B cell (primary cell): ENCODE measurements at regions of chr7 and their contacts with region 1.

Region 1: DNA sequence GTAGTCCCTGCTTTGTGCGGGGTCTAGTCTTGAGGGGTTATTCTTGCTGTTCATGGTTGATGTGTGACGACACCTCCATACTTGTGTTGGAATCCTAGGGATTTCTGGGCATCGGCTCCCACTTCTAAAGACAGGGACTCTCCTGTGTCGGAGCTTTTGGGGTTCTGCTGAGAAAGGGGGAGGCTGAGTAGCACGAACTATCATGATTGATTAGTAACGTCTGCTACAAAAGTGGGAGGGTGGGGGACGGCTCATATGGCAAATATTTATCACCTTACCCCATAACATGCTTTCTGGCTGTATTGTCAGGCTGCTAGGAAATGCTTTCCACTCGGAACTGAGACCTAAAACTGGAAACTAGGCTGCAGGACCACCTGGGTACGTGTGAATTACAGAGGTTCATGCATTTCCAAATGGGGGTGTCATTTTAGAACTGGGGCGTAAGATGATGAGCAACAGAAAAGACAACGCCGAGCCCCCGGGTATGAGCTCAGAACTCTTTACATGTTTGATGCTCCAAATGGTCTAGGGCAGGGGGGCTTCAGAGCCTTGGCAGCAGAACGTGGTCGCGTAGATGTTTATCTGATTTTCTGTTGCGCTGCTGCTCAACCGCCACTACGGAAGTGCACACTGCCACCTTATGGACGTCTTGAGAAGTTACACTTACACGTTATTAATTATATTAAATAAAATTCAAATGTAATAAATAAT is 15.1 kb upstream of the NME8 start:
- DNase-seq: peak; percentile 68
- ATAC-seq: peak; percentile 61
- H3K4me3 ChIP-seq: peak overlapping the region in 4 of 5 experiments; percentile 26 to 53 (median 46)
- H3K4me3 Mint-ChIP-seq: peak overlapping the region; percentile 89
- H3K27ac ChIP-seq: no peak overlapping the region
- H3K27ac Mint-ChIP-seq: peak overlapping the region; percentile 53
- H3K4me1 ChIP-seq: peaks cover 6 to 10% of the 10 kb centered on the region in 2 donors
- H3K4me1 Mint-ChIP-seq: peaks cover 16% of the 10 kb centered on the region
- H3K27me3 ChIP-seq: peaks cover 0 to 6% (median 0%) of the 10 kb centered on the region in 4 experiments
- H3K27me3 Mint-ChIP-seq: peaks cover 8% of the 10 kb centered on the region
- CTCF ChIP-seq: peak; percentile 84

Region 2: GRCh38 chr7:36487756-36488336 is 1345.4 kb before region 1 on chr7:
- CTCF ChIA-PET with region 1: no interaction called
- POLR2A ChIA-PET with region 1: no interaction called
- intact Hi-C with region 1: loop called (anchors 2 kb)
- DNase-seq: peak; percentile 58
- ATAC-seq: peak; percentile 36
- H3K4me3 ChIP-seq: no peak overlapping the region
- H3K4me3 Mint-ChIP-seq: no peak overlapping the region
- H3K27ac ChIP-seq: no peak overlapping the region
- H3K27ac Mint-ChIP-seq: no peak overlapping the region
- H3K4me1 ChIP-seq: no peaks in the 10 kb centered on the region
- H3K4me1 Mint-ChIP-seq: no peaks in the 10 kb centered on the region
- H3K27me3 ChIP-seq: no peaks in the 10 kb centered on the region
- H3K27me3 Mint-ChIP-seq: peaks cover 13% of the 10 kb centered on the region
- CTCF ChIP-seq: peak; percentile 76

Region 3: DNA sequence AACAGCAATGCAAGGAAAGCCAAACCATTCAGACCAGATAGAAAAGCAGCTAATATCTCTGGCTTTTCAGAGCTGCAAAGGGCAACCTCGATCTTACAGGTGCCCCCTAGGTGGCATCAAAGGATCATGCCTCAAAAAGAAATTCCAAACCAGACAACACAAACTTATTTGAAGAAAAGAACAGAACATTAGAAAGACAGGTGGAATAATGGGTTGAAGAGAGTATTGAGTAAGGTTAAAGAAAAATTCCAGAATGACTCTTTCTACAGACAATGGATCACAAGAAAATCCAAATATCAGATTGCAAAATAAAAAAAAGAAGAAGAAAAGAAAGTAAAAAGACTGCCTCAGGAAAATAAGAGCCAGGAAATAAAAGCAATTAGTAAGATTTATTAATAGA is 598.3 kb before region 1 on chr7:
- CTCF ChIA-PET with region 1: interaction called, 7 read pairs
- POLR2A ChIA-PET with region 1: no interaction called
- intact Hi-C with region 1: loop called (anchors 1 kb)
- DNase-seq: peak; percentile 58
- ATAC-seq: peak; percentile 24
- H3K4me3 ChIP-seq: no peak overlapping the region
- H3K4me3 Mint-ChIP-seq: no peak overlapping the region
- H3K27ac ChIP-seq: no peak overlapping the region
- H3K27ac Mint-ChIP-seq: no peak overlapping the region
- H3K4me1 ChIP-seq: no peaks in the 10 kb centered on the region
- H3K4me1 Mint-ChIP-seq: peaks cover 2% of the 10 kb centered on the region
- H3K27me3 ChIP-seq: no peaks in the 10 kb centered on the region
- H3K27me3 Mint-ChIP-seq: no peaks in the 10 kb centered on the region
- CTCF ChIP-seq: peak; percentile 81

Region 4: DNA sequence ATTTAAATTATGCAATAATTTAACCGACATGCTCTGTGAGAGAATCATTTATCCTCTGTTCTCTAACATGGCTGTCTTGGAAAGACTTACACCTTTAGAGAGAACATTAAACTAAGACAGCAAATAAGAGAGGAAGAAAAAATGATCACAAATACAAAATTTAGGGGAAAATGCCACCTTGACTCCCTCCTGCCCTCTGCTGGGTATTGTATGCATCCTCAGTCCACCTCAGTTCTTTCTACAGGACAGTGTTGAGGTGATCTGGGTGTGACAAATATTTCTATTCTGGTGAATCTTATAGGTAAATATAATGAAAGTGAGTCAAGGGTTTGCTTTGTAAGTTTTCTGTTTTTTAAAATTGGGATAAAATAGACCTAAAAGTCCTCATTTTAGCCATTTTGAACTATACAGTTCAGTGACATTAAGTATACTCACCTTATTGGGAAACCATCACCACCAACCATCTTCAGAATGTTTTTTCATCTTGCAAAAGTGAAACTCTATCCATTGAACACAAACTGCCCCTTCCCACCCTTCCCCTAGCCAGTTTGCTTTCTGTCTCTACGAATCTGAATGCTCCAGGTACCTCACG is 323.1 kb before region 1 on chr7:
- CTCF ChIA-PET with region 1: interaction called, 8 read pairs
- POLR2A ChIA-PET with region 1: no interaction called
- intact Hi-C with region 1: loop called (anchors 1 kb)
- DNase-seq: peak; percentile 46
- ATAC-seq: no peak
- H3K4me3 ChIP-seq: no peak overlapping the region
- H3K4me3 Mint-ChIP-seq: no peak overlapping the region
- H3K27ac ChIP-seq: no peak overlapping the region
- H3K27ac Mint-ChIP-seq: no peak overlapping the region
- H3K4me1 ChIP-seq: no peaks in the 10 kb centered on the region
- H3K4me1 Mint-ChIP-seq: no peaks in the 10 kb centered on the region
- H3K27me3 ChIP-seq: peaks cover 0 to 11% (median 2%) of the 10 kb centered on the region in 4 experiments
- H3K27me3 Mint-ChIP-seq: peaks cover 33% of the 10 kb centered on the region
- CTCF ChIP-seq: peak; percentile 88

Region 5: DNA sequence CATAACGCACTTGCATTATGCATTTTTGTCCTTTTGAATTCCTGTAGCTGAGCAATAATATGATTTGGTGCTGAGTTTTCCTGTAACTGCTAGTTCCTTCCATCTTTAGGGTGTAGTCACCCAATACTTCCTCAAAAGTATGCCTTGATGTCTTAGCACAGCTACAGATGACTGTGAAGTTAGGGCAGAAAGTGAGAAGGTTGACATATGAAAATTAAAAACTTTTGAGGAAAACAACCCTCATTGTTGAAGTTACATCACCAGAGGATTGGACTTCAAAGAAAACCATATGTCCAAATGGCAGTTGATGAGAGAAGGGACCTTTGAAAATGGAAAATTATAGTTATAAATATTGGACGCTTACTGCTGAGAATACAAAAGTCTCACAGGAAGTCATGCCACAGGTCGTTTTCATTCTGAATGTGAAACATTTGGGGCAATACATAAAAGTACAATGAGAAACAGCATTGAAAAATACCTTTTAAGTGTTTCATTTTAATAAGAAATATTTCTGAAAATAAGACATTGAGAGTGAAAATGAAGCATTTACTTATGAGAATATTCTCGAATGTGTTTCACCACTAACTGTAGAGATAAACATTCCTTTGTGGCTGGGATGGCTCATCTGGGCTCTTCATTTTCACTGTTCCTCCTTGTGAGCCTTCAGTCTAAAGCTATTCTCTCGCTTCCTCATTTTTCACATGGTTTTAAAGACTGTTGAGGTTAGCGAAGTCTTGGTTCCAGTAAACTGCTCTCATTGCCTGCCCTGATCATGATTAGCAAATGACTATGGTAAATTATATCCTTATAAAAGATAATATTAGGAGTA is 46.3 kb before region 1 on chr7:
- CTCF ChIA-PET with region 1: interaction called, 4 read pairs
- POLR2A ChIA-PET with region 1: no interaction called
- intact Hi-C with region 1: loop called (anchors 5 kb)
- DNase-seq: peak; percentile 72
- ATAC-seq: peak; percentile 87
- H3K4me3 ChIP-seq: peak overlapping the region in 3 of 5 experiments; percentile 1 to 17 (median 13)
- H3K4me3 Mint-ChIP-seq: peak overlapping the region; percentile 89
- H3K27ac ChIP-seq: peak overlapping the region; percentile 59 to 85
- H3K27ac Mint-ChIP-seq: peak overlapping the region; percentile 95
- H3K4me1 ChIP-seq: peaks cover 28 to 39% of the 10 kb centered on the region in 2 donors
- H3K4me1 Mint-ChIP-seq: peaks cover 31% of the 10 kb centered on the region
- H3K27me3 ChIP-seq: no peaks in the 10 kb centered on the region
- H3K27me3 Mint-ChIP-seq: no peaks in the 10 kb centered on the region
- CTCF ChIP-seq: no peak

Region 6: GRCh38 chr7:39272691-39273090 is 1439.4 kb after region 1 on chr7:
- CTCF ChIA-PET with region 1: no interaction called
- POLR2A ChIA-PET with region 1: no interaction called
- intact Hi-C with region 1: no loop called
- DNase-seq: no peak
- ATAC-seq: no peak
- H3K4me3 ChIP-seq: no peak overlapping the region
- H3K4me3 Mint-ChIP-seq: no peak overlapping the region
- H3K27ac ChIP-seq: no peak overlapping the region
- H3K27ac Mint-ChIP-seq: no peak overlapping the region
- H3K4me1 ChIP-seq: no peaks in the 10 kb centered on the region
- H3K4me1 Mint-ChIP-seq: no peaks in the 10 kb centered on the region
- H3K27me3 ChIP-seq: peaks cover 0 to 3% (median 0%) of the 10 kb centered on the region in 4 experiments
- H3K27me3 Mint-ChIP-seq: peaks cover 17% of the 10 kb centered on the region
- CTCF ChIP-seq: no peak